ENCODE measurements at regions of chr22 and their contacts with region 1.

Region 1: GRCh38 chr22:46762238-46763050 is at the start of gene TBC1D22A:
- DNase-seq: peak; percentile 96
- ATAC-seq: peak; percentile 95
- H3K4me3 Mint-ChIP-seq: peak within 1 kb of the TSS; percentile 100
- H3K27ac Mint-ChIP-seq: peak within 1 kb of the TSS; percentile 99
- H3K4me1 Mint-ChIP-seq: peaks cover 54% of the 10 kb centered on the region
- H3K27me3 Mint-ChIP-seq: no peaks in the 10 kb centered on the region
- total RNA-seq, gene TBC1D22A: 34.1 to 38.7 TPM

Region 2: DNA sequence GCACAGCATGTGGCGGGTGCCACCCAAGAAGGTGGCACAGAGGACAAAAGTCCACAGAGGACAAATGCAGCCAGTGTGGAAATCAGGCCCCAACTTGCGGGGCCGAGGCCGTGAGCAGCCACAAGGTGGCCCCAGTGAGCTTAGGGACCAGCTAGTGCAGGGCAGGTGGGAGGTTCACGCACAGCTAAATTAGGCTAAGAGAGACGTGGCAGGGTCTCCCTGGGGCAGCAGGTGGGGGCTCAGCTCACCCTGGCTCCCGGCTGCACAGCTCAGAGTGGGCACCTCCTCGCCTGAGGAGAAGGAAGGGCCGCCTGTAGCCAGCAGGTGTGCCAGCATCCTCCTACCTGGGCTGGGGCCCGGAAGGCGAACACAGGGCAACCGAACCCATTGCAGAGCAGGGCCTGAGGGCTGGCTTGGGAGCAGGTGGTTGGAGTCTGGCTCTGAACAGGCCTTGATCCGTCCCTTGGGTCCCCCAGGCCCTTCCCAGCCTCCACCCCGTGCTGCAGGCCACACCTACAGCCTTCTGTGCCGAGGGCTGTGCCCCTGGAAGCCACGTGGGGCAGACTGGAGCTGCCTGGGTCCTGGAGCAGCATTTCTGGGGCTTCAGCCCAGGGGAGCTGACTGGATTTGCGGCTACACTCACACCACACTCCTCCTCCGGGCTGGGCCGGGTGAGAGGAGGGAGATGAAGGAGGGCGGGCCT is 198.9 kb before region 1 on chr22:
- CTCF ChIA-PET with region 1: interaction called, 10 read pairs
- POLR2A ChIA-PET with region 1: no interaction called
- DNase-seq: peak; percentile 83
- ATAC-seq: peak; percentile 91
- H3K4me3 Mint-ChIP-seq: no peak overlapping the region
- H3K27ac Mint-ChIP-seq: peak overlapping the region; percentile 61
- H3K4me1 Mint-ChIP-seq: peaks cover 22% of the 10 kb centered on the region
- H3K27me3 Mint-ChIP-seq: peaks cover 4% of the 10 kb centered on the region

Region 3: DNA sequence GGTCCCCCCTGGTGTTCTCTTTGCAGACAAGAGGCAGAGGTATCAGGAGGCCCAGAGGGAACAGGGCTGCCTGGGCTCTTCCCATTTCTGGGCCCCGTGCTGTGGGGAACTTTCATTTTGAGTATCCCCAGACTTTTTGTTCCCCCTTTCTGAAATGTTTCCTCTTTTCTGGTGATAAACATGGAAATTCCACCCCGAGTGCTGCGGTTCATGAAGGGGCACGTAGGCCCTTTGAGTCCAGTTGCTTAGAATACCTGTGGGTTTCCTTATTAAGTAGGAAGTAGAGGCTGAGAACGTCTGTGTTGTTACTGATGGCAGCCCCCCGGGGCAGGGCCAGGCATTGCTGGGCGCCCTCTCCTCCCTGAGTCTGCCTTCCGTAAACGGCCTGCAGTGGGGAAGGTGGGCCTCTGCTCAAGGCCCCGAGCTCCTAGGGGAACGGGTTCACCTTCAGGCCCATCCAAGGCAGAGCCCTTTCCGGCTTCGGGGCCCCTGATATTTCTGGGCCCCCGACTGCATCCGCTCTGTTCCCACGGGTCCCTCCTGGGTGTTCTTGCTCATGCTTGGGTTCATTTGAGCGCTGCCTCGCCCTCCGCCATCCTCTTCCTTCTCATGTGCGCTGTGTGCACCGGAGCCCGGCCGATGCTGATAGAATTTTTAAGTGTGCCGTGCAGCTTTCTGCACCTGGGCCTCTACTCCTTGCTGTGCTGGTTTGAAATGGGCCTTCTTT is 12.0 kb after region 1 on chr22:
- CTCF ChIA-PET with region 1: interaction called, 19 read pairs
- POLR2A ChIA-PET with region 1: interaction called, 25 read pairs
- DNase-seq: no peak
- ATAC-seq: peak; percentile 47
- H3K4me3 Mint-ChIP-seq: peak overlapping the region; percentile 59
- H3K27ac Mint-ChIP-seq: peak overlapping the region; percentile 81
- H3K4me1 Mint-ChIP-seq: peaks cover 63% of the 10 kb centered on the region
- H3K27me3 Mint-ChIP-seq: no peaks in the 10 kb centered on the region

Region 4: GRCh38 chr22:46791201-46791731 is 28.8 kb after region 1 on chr22:
- CTCF ChIA-PET with region 1: interaction called, 14 read pairs
- POLR2A ChIA-PET with region 1: interaction called, 29 read pairs
- DNase-seq: peak; percentile 89
- ATAC-seq: peak; percentile 98
- H3K4me3 Mint-ChIP-seq: peak overlapping the region; percentile 77
- H3K27ac Mint-ChIP-seq: peak overlapping the region; percentile 100
- H3K4me1 Mint-ChIP-seq: peaks cover 52% of the 10 kb centered on the region
- H3K27me3 Mint-ChIP-seq: no peaks in the 10 kb centered on the region

Region 5: DNA sequence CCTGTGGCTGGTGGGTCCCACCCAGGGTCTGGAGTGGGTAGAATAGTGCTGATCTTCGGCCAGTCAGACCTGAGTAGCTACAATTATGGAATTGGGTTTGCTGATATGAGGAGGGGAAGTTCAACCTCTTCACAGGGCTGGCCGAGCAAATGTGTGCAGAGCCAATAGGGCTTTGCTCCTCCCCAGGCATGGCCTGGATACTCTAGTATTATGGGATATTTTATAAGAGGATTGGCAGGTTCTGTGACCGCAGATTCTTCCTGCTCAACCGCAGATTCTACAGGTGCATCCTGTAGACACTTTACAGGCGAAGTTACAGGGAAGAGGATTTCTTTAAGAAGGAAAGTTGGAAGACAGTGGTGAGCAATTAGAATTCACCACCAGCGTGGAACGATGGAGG is 44.4 kb after region 1 on chr22:
- CTCF ChIA-PET with region 1: interaction called, 88 read pairs
- POLR2A ChIA-PET with region 1: interaction called, 7 read pairs
- DNase-seq: no peak
- ATAC-seq: no peak
- H3K4me3 Mint-ChIP-seq: no peak overlapping the region
- H3K27ac Mint-ChIP-seq: peak overlapping the region; percentile 5
- H3K4me1 Mint-ChIP-seq: peaks cover 30% of the 10 kb centered on the region
- H3K27me3 Mint-ChIP-seq: no peaks in the 10 kb centered on the region